Body of pancreas (tissue), 4 donors: ENCODE measurements at regions of chr11 and their contacts with region 1.

Region 1: DNA sequence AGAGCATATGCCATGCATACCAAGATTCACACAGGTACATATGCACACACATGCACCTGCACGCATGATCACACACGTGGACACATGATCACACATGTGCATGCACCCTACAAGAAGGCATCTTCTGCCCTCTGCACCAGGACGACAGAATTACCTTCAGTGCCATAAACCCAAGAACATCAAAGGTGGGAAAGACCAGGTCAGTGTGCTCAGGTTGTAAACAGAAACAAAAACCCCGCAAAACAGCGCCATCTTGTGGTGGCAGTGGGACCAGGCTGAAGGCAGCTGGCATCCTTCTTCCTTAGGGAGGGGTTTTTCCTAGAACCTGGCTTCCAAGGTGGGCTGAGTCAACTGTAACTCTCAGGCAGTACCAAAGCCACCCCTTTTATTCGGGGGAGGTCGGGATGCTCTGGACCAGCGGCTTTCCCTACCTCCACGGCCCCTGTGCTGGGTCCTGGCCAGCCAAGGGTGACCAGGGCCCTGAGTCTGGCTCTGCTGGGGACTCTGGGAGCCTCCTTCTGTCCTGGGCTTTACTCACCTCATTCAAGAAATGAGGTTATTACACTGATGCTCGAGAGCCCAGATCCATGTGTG is 69.4 kb upstream of the FGF3 start:
- DNase-seq: peak; percentile 65 to 77 (median 71)
- ATAC-seq: peak; percentile 67
- H3K4me3 ChIP-seq: no peak overlapping the region
- H3K27ac ChIP-seq: no peak overlapping the region
- H3K4me1 ChIP-seq: peaks cover 7% of the 10 kb centered on the region
- H3K27me3 ChIP-seq: no peaks in the 10 kb centered on the region
- CTCF ChIP-seq: peak; percentile 72 to 89 (median 75)
- POLR2A ChIP-seq: no peak

Region 2: DNA sequence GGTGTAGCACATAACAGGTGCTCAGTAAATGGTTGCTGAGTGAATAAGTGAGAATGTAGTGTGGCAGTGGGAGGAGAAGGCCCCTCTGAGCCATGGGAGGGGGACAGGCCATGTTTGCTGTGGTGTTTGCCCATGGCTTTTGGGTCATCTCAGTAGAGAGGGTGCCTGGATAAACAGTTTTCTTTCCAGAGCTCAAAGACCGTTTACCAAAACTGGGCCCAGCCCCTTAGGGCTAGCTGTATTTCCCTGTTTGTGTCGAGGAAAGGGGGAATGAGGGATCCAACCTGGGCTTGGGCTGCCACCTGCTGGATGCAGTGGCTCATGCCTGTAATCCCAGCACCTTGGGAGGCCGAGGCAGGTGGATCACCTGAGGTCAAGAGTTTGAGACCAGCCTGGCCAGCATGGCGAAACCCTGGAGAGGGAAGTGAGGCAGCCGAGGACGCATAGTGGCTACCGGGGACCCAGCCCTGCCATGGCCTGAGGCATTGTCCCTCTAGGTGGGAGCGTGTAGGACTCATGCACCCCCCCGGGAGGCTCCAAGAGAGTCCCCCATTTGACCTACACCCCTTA is 204.7 kb before region 1 on chr11:
- intact Hi-C with region 1: loop called (anchors 5 kb)
- DNase-seq: peak in 2 of 4 donors; percentile 18 to 49
- ATAC-seq: peak; percentile 27
- H3K4me3 ChIP-seq: no peak overlapping the region
- H3K27ac ChIP-seq: no peak overlapping the region
- H3K4me1 ChIP-seq: peaks cover 13% of the 10 kb centered on the region
- H3K27me3 ChIP-seq: no peaks in the 10 kb centered on the region
- CTCF ChIP-seq: peak in 6 of 7 experiments; percentile 28 to 47 (median 44)
- POLR2A ChIP-seq: no peak